CD8-positive, alpha-beta T cell (primary cell): ENCODE measurements at regions of chr4 and their contacts with region 1.

Region 1: DNA sequence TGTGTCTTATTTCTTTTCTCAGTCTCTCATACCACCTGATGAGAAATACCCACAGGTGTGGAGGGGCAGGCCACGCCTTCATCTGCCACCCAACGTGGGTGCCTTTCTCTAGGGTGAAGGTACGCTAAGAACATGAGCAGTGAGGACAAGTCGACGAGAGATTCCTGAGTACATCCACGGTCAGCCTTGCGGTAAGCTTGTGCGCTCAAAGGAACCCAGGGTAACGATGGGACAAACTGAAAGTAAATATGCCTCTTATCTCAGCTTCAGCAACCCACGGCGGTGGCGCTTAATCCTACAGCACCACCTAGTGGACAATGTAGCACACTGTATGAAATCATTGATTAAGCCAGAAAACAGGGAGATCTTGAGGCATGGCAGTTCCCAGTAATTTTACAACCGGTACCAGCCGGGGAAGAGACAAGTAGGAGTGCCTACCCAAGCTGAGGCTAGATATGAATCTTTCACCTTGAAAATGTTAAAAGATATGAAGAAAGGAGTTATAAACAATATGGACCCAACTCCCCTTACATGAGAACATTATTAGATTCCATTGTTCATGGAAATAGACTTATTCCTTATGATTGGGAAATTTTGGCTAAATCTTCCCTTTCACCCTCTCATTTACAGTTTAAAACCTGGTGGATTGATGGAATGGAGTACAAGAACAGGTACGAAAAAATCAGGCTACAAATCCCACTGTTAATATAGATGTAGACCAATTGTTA is 63.0 kb downstream of the ZNF732 start:
- DNase-seq: peak; percentile 25 to 88 (median 64)
- ATAC-seq: peak; percentile 97
- H3K4me3 ChIP-seq: peak overlapping the region; percentile 49 to 55
- H3K4me3 Mint-ChIP-seq: peak overlapping the region; percentile 90
- H3K27ac ChIP-seq: peak overlapping the region in 1 of 2 experiments; percentile 64
- H3K27ac Mint-ChIP-seq: peak overlapping the region; percentile 89
- H3K4me1 ChIP-seq: peaks cover 4% of the 10 kb centered on the region
- H3K4me1 Mint-ChIP-seq: peaks cover 11% of the 10 kb centered on the region
- H3K27me3 ChIP-seq: no peaks in the 10 kb centered on the region
- H3K27me3 Mint-ChIP-seq: no peaks in the 10 kb centered on the region
- CTCF ChIP-seq: peak; percentile 78

Region 2: GRCh38 chr4:124275-125081 is 117.8 kb before region 1 on chr4 and contains the start of gene ZNF718:
- CTCF ChIA-PET with region 1: interaction called, 4 read pairs
- POLR2A ChIA-PET with region 1: interaction called, 3 read pairs
- intact Hi-C with region 1: loop called (anchors 1 to 2 kb)
- DNase-seq: peak; percentile 78 to 97 (median 91)
- ATAC-seq: peak; percentile 95
- H3K4me3 ChIP-seq: peak within 1 kb of the TSS; percentile 78 to 96
- H3K4me3 Mint-ChIP-seq: peak within 1 kb of the TSS; percentile 99
- H3K27ac ChIP-seq: peak within 1 kb of the TSS; percentile 75 to 83
- H3K27ac Mint-ChIP-seq: peak within 1 kb of the TSS; percentile 99
- H3K4me1 ChIP-seq: peaks cover 29% of the 10 kb centered on the region
- H3K4me1 Mint-ChIP-seq: peaks cover 44% of the 10 kb centered on the region
- H3K27me3 ChIP-seq: no peaks in the 10 kb centered on the region
- H3K27me3 Mint-ChIP-seq: no peaks in the 10 kb centered on the region
- CTCF ChIP-seq: no peak
- total RNA-seq, gene ZNF718: 3.6 to 4.0 TPM

Region 3: DNA sequence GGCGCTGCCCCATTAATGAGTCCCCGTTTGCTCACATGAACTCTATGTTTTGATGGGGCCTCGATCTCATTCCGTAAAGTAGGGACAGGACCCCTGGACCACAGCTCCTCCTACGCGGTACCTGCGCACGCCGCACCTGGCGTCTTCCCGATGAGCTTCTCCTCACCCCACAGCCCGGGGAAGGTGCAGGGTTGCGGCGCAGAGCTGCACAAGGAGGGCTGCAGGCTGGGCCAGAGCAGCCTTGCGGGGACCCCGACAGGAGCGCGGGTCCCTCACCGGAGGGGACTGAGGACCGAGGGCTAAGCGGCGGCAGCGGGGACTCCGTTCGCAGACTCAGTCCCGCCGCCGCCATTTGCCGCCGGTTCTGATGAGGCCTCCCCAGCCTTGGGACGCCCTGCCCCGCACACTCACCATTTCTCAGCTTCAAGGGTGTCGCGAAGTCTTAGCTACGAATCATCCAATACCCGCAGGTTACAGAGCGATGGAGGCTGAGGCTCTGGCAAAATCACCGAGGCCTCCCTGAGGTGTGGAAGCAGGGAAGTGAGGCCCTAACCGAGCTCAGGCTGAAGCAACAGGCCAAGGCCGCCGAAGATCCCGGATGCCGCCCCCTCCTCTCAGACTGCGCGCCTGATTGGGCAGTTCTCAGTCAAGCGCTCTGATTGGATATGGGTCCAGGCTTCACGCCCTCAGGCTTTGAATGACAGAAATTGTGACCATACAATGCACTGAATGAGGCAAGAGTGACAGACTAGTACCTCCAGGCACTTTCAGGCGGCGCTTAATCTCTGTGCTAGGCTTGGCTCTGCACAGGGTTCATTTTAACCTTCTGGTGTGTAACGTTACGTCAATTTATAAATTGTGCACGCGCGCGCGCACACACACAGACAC is 231.5 kb after region 1 on chr4:
- CTCF ChIA-PET with region 1: no interaction called
- POLR2A ChIA-PET with region 1: no interaction called
- intact Hi-C with region 1: loop called in 1 of 2 experiments (anchors 5 kb)
- DNase-seq: peak; percentile 85 to 99 (median 92)
- ATAC-seq: peak; percentile 96
- H3K4me3 ChIP-seq: peak overlapping the region; percentile 77 to 79
- H3K4me3 Mint-ChIP-seq: peak overlapping the region; percentile 99
- H3K27ac ChIP-seq: peak overlapping the region; percentile 86 to 88
- H3K27ac Mint-ChIP-seq: peak overlapping the region; percentile 100
- H3K4me1 ChIP-seq: peaks cover 10% of the 10 kb centered on the region
- H3K4me1 Mint-ChIP-seq: peaks cover 34% of the 10 kb centered on the region
- H3K27me3 ChIP-seq: no peaks in the 10 kb centered on the region
- H3K27me3 Mint-ChIP-seq: no peaks in the 10 kb centered on the region
- CTCF ChIP-seq: no peak

Region 4: DNA sequence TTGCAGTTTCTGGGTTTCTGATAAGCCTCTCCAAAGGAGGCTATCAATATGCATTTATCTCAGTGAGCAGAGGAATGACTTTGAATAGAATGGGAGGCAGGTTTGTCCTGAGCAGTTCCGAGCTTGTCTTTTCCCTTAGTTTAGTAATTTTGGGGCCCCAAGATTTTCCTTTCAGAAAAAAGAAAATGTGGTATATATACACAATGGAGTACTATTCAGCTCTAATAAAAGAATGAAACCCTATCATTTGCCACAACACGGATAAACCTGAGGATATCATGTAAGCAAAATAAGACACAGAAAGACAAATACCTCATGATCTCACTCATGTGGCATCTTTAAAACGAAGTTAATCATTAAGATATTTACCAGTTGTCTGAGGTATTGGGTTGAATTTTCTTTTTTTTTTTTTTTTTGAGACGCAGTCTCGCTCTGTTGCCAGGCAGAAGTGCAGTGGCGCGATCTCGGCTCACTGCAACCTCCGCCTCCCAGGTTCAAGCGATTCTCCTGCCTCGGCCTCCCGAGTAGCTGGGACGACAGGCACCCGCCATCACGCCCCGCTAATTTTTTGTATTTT is 256.1 kb after region 1 on chr4:
- CTCF ChIA-PET with region 1: no interaction called
- POLR2A ChIA-PET with region 1: interaction called, 3 read pairs
- intact Hi-C with region 1: loop called in 1 of 2 experiments (anchors 5 kb)
- DNase-seq: peak in 4 of 9 experiments; percentile 0 to 48 (median 40)
- ATAC-seq: peak; percentile 54
- H3K4me3 ChIP-seq: peak overlapping the region; percentile 85 to 90
- H3K4me3 Mint-ChIP-seq: peak overlapping the region; percentile 92
- H3K27ac ChIP-seq: peak overlapping the region; percentile 92 to 93
- H3K27ac Mint-ChIP-seq: peak overlapping the region; percentile 96
- H3K4me1 ChIP-seq: peaks cover 22% of the 10 kb centered on the region
- H3K4me1 Mint-ChIP-seq: peaks cover 42% of the 10 kb centered on the region
- H3K27me3 ChIP-seq: no peaks in the 10 kb centered on the region
- H3K27me3 Mint-ChIP-seq: no peaks in the 10 kb centered on the region
- CTCF ChIP-seq: no peak

Region 5: DNA sequence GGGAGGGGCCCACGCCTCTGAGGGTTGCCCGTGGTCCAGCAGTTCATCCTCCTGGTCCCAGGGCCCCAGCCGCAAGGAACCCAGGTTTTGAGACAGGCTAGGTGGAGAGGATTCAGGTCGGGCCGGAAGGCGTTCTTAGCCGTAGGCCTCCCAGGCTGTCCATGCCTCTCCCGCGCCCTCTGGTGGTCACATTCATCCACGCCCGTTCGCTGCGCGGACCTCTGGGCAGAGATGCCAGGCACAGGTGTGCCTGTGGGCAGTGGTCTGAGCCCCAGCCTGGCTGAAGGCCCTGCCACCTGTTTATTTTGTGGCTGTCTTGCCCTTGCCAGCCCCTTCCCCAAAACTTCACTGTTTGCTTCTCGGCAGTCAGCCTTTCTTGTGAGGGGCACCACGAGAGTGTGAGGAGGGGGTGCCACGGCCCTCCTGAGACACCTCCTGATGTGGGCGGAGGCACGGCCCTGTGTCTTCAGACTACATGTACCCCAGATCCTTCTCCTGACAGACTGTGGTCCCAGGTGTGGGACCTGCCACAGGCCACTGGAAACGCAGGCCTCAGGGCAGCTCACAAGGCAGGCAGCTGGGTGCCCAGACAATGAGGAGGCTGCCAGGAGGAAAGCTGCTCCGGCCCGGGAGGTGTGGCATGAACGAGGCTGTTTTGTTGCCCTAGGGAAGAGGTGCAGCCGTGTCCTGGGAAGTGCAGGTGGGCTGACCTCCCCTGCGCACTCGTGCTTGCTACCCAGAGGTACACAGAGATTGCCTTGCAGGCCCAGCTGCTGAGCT is 1109.8 kb after region 1 on chr4:
- CTCF ChIA-PET with region 1: no interaction called
- POLR2A ChIA-PET with region 1: no interaction called
- intact Hi-C with region 1: loop called (anchors 10 kb)
- DNase-seq: peak; percentile 78 to 96 (median 90)
- ATAC-seq: peak; percentile 30
- H3K4me3 ChIP-seq: no peak overlapping the region
- H3K4me3 Mint-ChIP-seq: no peak overlapping the region
- H3K27ac ChIP-seq: peak overlapping the region in 1 of 2 experiments; percentile 28
- H3K27ac Mint-ChIP-seq: peak overlapping the region; percentile 72
- H3K4me1 ChIP-seq: peaks cover 21% of the 10 kb centered on the region
- H3K4me1 Mint-ChIP-seq: peaks cover 33% of the 10 kb centered on the region
- H3K27me3 ChIP-seq: no peaks in the 10 kb centered on the region
- H3K27me3 Mint-ChIP-seq: no peaks in the 10 kb centered on the region
- CTCF ChIP-seq: peak; percentile 85